ENCODE measurements at regions of chr7 and their contacts with region 1.

Region 1: DNA sequence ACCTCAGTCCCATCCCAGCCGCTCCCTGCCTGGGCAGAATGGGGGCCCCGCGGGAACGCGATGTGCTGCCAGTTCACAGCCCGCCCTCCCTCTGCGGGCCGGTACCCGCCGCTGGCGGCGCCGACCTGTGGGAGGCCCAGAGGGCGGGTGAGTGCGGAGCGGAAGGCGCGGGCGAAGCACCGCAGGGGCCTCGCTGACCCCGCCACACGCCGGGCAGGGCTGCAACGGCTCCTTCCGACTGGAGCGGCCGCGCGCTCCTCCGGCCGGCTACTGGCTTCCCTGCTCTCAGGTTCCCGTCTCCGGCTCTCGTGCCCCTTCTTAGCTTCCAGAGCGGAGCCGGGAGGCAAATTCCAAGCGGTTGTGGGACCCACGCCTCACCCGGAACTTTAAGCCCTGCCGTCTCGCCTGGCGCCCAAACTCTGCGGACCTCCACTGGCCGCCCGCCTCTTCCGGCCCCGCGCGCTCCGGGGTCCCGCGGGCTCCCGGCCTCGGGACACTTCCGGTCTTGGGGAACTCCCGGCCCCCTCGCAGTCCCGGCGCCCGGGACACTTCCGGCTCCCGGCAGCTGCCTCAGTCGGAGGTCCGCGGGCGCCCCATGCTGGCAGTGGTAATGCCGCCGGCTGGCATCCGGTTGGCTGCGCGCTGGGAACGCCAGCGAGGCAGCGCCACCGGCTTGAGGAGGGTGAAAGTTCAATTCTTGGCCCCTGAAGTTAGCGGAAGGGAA is at the start of gene CYREN:
- DNase-seq: peak; percentile 91
- ATAC-seq: peak; percentile 91
- H3K4me3 ChIP-seq: peak within 1 kb of the TSS; percentile 91 to 97 (median 95)
- H3K27ac ChIP-seq: peak within 1 kb of the TSS; percentile 87
- H3K4me1 ChIP-seq: peaks cover 47% of the 10 kb centered on the region
- H3K27me3 ChIP-seq: no peaks in the 10 kb centered on the region; a peak in 1 of 5 replicates
- CTCF ChIP-seq: peak; percentile 95
- EP300 ChIP-seq: peak in 1 of 2 experiments; percentile 48; a peak in 3 of 4 replicates
- POLR2A ChIP-seq: peak; percentile 71 to 78
- RAD21 ChIP-seq: peak; percentile 95
- total RNA-seq, gene CYREN: 60.7 and 68.6 TPM in 2 replicates

Region 2: DNA sequence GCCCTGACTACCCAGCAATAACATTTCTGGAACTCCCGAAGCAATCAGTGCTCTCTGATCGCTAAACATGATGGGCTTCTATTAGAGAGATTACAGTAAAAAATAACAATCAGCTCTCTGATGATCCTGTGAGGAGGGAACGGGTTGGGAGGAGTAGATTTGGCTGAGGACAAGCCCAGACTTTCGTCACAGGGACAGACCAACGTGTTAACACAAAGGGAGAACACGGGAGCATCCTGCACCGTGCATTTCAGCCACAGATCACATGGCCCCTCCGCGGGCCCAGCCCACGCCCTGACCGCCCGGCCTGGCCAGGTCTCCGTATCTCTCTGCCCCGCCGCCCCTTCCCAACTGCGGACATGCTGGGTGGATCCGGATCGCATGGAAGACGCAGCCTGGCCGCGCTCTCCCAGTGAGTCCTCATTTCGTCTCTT is 279.2 kb before region 1 on chr7:
- CTCF ChIA-PET with region 1: no interaction called
- POLR2A ChIA-PET with region 1: interaction called, 5 read pairs
- in situ Hi-C with region 1: no loop called
- intact Hi-C with region 1: loop called (anchors 5 kb)
- DNase-seq: peak; percentile 98
- ATAC-seq: peak; percentile 92
- H3K4me3 ChIP-seq: peak overlapping the region; percentile 70 to 85 (median 77); a peak in 5 of 6 replicates
- H3K27ac ChIP-seq: peak overlapping the region; percentile 84
- H3K4me1 ChIP-seq: peaks cover 63% of the 10 kb centered on the region
- H3K27me3 ChIP-seq: no peaks in the 10 kb centered on the region; a peak in 1 of 5 replicates
- CTCF ChIP-seq: no peak
- EP300 ChIP-seq: peak in 1 of 2 experiments; percentile 62; a peak in 1 of 4 replicates
- POLR2A ChIP-seq: peak; percentile 74 to 85; a peak in 3 of 4 replicates
- RAD21 ChIP-seq: peak; percentile 50; the same call in 1 of the 2 replicates

Region 3: DNA sequence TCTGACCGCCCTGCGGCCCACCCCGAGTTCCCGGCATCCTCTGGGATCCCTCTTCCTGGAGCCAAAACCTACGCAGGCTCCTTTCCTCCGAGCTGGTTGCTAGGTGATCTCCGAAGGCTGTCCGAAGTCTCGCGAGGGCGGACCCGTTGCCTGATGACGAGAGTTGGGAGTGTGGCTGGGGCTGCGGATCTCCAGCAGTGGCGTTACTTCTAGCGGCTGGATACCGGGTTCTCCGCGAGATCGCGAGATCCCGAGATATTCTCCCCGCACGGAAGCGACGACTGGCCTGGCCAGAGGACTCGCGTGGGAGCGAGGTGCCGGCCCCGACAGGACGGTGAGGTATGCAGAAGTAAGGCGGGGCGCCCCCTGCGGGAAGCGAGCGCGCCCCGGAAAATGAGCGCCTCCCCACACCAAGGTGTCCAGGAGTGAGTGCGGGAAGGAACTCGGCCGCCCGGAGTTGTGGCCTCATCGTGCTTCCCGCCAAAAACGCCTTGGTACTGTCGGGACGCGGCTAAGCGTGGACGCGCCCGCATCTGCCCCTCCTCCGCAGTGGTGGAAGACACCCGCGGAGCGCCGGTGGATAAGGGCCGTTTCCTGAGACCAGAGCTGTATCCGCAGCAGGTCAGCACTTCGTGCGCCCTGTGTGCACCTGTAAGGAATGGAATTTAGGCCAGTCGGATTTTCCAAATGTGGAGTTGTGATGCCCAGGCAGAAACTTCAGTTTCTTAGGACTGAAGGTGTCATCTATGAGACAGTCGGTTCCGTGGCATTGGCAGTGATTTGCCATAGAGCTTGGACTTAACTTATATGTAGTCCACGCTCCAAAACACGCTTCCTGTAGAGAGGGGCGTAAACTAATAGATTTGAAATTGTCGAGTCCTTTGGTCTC is 183.8 kb before region 1 on chr7 and contains the start of gene AGBL3:
- CTCF ChIA-PET with region 1: interaction called, 11 read pairs
- POLR2A ChIA-PET with region 1: interaction called, 18 read pairs
- in situ Hi-C with region 1: loop called (anchors 5 kb)
- intact Hi-C with region 1: loop called (anchors 2 kb)
- DNase-seq: peak; percentile 90
- ATAC-seq: peak; percentile 98
- H3K4me3 ChIP-seq: peak within 1 kb of the TSS; percentile 83 to 98 (median 98)
- H3K27ac ChIP-seq: peak within 1 kb of the TSS; percentile 82
- H3K4me1 ChIP-seq: peaks cover 39% of the 10 kb centered on the region
- H3K27me3 ChIP-seq: no peaks in the 10 kb centered on the region; a peak in 2 of 5 replicates
- CTCF ChIP-seq: peak; percentile 88
- EP300 ChIP-seq: no peak
- POLR2A ChIP-seq: peak; percentile 72 to 79; a peak in 3 of 4 replicates
- RAD21 ChIP-seq: peak; percentile 83
- total RNA-seq, gene AGBL3: 5.5 and 7.2 TPM in 2 replicates

Region 4: GRCh38 chr7:134992626-134993179 is 177.7 kb before region 1 on chr7:
- CTCF ChIA-PET with region 1: interaction called, 11 read pairs
- POLR2A ChIA-PET with region 1: interaction called, 30 read pairs
- in situ Hi-C with region 1: loop called (anchors 5 kb)
- intact Hi-C with region 1: loop called (anchors 2 kb)
- DNase-seq: no peak
- ATAC-seq: no peak
- H3K4me3 ChIP-seq: peak overlapping the region in 1 of 3 experiments; percentile 31; a peak in 1 of 6 replicates
- H3K27ac ChIP-seq: peak overlapping the region; percentile 96
- H3K4me1 ChIP-seq: peaks cover 93% of the 10 kb centered on the region
- H3K27me3 ChIP-seq: no peaks in the 10 kb centered on the region; a peak in 1 of 5 replicates
- CTCF ChIP-seq: no peak
- EP300 ChIP-seq: no peak
- POLR2A ChIP-seq: no peak
- RAD21 ChIP-seq: no peak

Region 5: GRCh38 chr7:135154734-135155133 is 15.7 kb before region 1 on chr7:
- CTCF ChIA-PET with region 1: no interaction called
- POLR2A ChIA-PET with region 1: interaction called, 5 read pairs
- in situ Hi-C with region 1: no loop called
- intact Hi-C with region 1: loop called (anchors 2 kb)
- DNase-seq: peak; percentile 49
- ATAC-seq: peak; percentile 58
- H3K4me3 ChIP-seq: no peak overlapping the region
- H3K27ac ChIP-seq: no peak overlapping the region
- H3K4me1 ChIP-seq: peaks cover 77% of the 10 kb centered on the region
- H3K27me3 ChIP-seq: no peaks in the 10 kb centered on the region
- CTCF ChIP-seq: no peak
- EP300 ChIP-seq: no peak
- POLR2A ChIP-seq: no peak
- RAD21 ChIP-seq: no peak

Region 6: GRCh38 chr7:135193615-135194081 is 23.2 kb after region 1 on chr7:
- CTCF ChIA-PET with region 1: no interaction called
- POLR2A ChIA-PET with region 1: no interaction called
- in situ Hi-C with region 1: no loop called
- intact Hi-C with region 1: no loop called
- DNase-seq: peak; percentile 40
- ATAC-seq: peak; percentile 39
- H3K4me3 ChIP-seq: no peak overlapping the region
- H3K27ac ChIP-seq: no peak overlapping the region
- H3K4me1 ChIP-seq: peaks cover 12% of the 10 kb centered on the region
- H3K27me3 ChIP-seq: no peaks in the 10 kb centered on the region
- CTCF ChIP-seq: no peak
- EP300 ChIP-seq: no peak
- POLR2A ChIP-seq: no peak
- RAD21 ChIP-seq: no peak

Region 7: DNA sequence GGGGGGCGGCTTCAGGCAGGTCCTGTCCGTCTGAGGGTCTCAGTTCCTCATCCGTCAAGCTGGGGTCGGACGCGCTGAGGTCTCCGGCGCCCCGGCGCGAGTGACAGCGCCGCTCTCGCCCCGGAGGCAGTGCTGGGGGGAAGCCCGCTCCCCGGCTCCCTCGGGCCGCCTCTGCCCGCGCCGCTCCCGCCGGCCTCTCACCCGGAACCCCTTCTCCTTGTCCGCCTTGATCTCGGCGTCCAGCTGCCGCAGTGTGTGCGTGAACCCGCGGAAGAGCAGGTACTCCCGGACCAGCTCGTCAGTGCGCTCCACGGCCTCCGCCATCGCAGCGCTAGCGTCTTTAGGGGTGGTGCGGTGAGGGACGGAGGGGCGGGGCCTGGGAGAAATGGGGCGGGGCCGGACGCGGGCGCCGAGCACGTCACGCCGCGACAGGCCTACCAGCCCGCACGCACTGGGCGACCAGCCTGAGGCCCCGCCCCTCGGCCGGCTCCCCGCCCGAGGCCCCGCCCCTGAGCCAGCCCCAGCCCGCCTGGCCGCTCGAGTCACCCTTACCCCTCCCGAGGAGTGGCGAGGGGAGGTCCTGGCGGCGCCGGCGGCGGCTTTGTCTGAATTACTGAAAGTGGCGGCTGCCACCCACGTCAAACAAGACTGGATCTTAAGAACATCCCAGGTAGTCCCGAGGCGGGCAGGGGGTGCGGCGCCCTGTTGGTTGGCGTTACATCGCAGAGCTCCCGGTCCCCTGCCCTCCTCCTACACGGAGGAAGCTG is 40.9 kb after region 1 on chr7 and contains the start of gene WDR91:
- CTCF ChIA-PET with region 1: no interaction called
- POLR2A ChIA-PET with region 1: interaction called, 12 read pairs
- in situ Hi-C with region 1: loop called (anchors 5 kb)
- intact Hi-C with region 1: loop called (anchors 2 kb)
- DNase-seq: peak; percentile 85
- ATAC-seq: peak; percentile 90
- H3K4me3 ChIP-seq: peak within 1 kb of the TSS; percentile 86 to 98 (median 96)
- H3K27ac ChIP-seq: peak within 1 kb of the TSS; percentile 54
- H3K4me1 ChIP-seq: peaks cover 66% of the 10 kb centered on the region
- H3K27me3 ChIP-seq: no peaks in the 10 kb centered on the region; a peak in 1 of 5 replicates
- CTCF ChIP-seq: peak; percentile 39; the same call in 1 of the 2 replicates
- EP300 ChIP-seq: no peak
- POLR2A ChIP-seq: peak; percentile 69 to 88
- RAD21 ChIP-seq: 0 out of 2 replicates have a peak, but pooled peaks have one; percentile 11
- total RNA-seq, gene WDR91: 10.0 and 12.1 TPM in 2 replicates

Measured in HepG2 (cell line).